Aorta (tissue), 5 donors: ENCODE measurements at regions of chr1 and their contacts with region 1.

Region 1: GRCh38 chr1:171781176-171781875 is at the start of gene METTL13:
- DNase-seq: peak; percentile 99
- ATAC-seq: peak; percentile 100
- H3K4me3 ChIP-seq: peak within 1 kb of the TSS; percentile 50 to 96
- H3K27ac ChIP-seq: peak within 1 kb of the TSS; percentile 51 to 93
- H3K4me1 ChIP-seq: peaks cover 0 to 4% of the 10 kb centered on the region in 2 donors
- H3K27me3 ChIP-seq: no peaks in the 10 kb centered on the region
- total RNA-seq, gene METTL13: 15.3 to 17.9 TPM

Region 2: GRCh38 chr1:171566467-171566866 is 214.9 kb before region 1 on chr1:
- intact Hi-C with region 1: no loop called
- DNase-seq: no peak
- ATAC-seq: no peak
- H3K4me3 ChIP-seq: no peak overlapping the region
- H3K27ac ChIP-seq: no peak overlapping the region
- H3K4me1 ChIP-seq: no peaks in the 10 kb centered on the region
- H3K27me3 ChIP-seq: no peaks in the 10 kb centered on the region

Region 3: GRCh38 chr1:171741872-171742576 is 39.3 kb before region 1 on chr1 and contains the start of gene VAMP4:
- intact Hi-C with region 1: loop called (anchors 2 kb)
- DNase-seq: peak; percentile 93 to 95
- ATAC-seq: peak; percentile 96
- H3K4me3 ChIP-seq: peak within 1 kb of the TSS; percentile 91 to 93
- H3K27ac ChIP-seq: peak within 1 kb of the TSS; percentile 65 to 94
- H3K4me1 ChIP-seq: peaks cover 0 to 7% of the 10 kb centered on the region in 2 donors
- H3K27me3 ChIP-seq: no peaks in the 10 kb centered on the region
- total RNA-seq, gene VAMP4: 22.4 to 28.7 TPM

Region 4: DNA sequence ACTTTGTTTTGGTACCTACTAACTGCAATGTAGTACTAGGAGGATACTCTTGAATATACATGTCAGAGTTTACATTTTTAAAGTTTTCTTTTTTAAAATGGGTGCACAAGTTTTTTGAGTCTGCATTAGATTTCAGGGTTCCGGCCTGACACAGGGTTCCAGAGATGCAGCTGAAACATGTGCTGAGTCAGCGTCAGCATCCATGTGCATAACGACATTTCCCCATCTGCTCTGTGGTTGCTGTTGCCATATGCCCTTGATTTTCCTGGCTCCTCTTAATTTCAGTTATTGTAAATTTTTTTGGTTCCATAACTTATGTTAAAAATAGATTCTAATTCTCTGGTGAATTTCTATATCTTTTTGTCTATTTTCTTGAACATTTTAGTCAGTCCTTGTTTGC is 12.2 kb before region 1 on chr1:
- intact Hi-C with region 1: no loop called
- DNase-seq: no peak
- ATAC-seq: no peak
- H3K4me3 ChIP-seq: no peak overlapping the region
- H3K27ac ChIP-seq: no peak overlapping the region
- H3K4me1 ChIP-seq: no peaks in the 10 kb centered on the region
- H3K27me3 ChIP-seq: no peaks in the 10 kb centered on the region